BJ (cell line): ENCODE measurements at regions of chr1 and their contacts with region 1.

Region 1: DNA sequence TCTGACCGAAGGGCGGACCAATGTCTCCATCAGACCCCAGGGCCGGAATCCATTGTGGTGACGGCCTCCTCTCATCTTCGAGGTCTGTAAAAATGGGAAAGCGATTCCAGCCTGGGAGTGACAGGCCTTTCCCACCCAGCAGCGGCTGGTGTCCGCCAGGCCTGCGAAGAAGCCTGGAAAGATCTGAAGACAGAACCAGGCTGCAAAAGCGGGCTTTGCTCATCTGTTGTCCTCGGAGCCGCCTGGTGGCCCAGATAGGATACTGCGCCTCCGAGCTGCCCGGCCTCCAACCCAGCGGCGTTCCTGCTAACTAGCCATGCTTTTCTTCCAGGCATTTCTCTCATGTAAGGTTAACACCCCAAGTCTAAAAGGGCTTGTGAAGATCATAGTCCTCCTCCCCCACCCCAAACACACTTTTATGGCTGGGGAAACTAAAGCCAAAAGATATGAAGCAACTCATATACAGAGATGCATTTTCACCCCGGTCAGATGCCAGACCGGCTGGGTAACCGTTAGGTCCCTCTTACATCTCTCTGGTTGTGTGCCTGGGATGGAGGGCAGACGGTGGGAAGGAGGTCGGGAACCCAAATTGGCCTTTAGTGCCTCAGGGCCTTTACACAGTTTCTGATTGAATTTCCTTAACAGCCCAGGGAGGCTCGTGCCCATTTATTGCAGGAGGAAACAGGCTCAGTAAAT is 1.9 kb upstream of the DHRS3 start:
- DNase-seq: no peak
- H3K4me3 ChIP-seq: peak overlapping the region; percentile 93
- H3K27me3 ChIP-seq: no peaks in the 10 kb centered on the region
- CTCF ChIP-seq: peak; percentile 98

Region 2: GRCh38 chr1:12314333-12314903 is 305.5 kb before region 1 on chr1:
- CTCF ChIA-PET with region 1: interaction called, 45 read pairs
- POLR2A ChIA-PET with region 1: no interaction called
- DNase-seq: no peak
- H3K4me3 ChIP-seq: no peak overlapping the region
- H3K27me3 ChIP-seq: no peaks in the 10 kb centered on the region
- CTCF ChIP-seq: peak; percentile 37; the same call in 1 of the 2 replicates

Region 3: DNA sequence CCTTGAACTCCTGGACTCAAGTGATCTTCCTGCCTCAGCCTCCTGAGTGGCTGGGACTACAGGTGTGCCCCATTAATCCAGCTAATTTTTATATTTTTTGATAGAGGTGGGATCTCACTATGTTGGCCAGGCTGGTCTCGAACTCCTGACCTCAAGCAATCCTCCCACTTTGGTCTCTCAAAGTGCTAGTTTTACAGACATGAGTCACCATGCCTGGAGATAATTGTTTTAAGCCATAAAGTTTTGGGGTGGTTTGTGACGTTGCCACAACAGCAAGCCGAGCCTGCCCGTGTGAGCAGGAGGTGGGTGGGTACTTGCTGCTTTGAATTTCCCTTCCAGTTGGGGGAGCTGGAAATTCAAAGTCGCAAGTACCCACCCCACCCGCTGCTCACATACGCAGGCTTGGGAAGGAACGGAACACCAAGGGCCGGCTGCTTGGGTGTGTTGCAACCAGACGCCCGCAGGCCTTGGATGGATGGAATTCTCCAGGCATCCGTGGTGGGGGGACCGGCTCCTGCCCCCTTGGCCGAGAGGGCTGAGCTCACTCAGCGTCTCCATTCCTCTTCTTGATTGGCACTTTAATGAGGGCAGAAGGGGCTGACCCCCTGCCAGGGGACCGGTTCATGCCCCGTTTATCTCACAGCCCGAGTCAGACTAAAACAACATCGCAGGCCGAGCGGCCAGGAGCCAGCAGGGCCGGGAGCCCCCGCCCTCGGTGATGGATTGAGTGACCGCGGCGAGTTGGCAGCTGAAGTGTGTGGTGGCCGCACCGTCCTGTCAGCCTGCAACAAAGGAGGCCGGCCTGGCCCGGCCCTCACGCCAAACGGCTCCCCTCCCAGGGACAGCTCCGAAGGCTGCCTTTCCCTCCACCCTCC is 80.0 kb before region 1 on chr1:
- CTCF ChIA-PET with region 1: interaction called, 11 read pairs
- POLR2A ChIA-PET with region 1: no interaction called
- DNase-seq: peak; percentile 98
- H3K4me3 ChIP-seq: no peak overlapping the region
- H3K27me3 ChIP-seq: peaks cover under 1% of the 10 kb centered on the region
- CTCF ChIP-seq: peak; percentile 24

Region 4: GRCh38 chr1:12604114-12604874 is 15.6 kb before region 1 on chr1:
- CTCF ChIA-PET with region 1: interaction called, 3 read pairs
- POLR2A ChIA-PET with region 1: interaction called, 53 read pairs
- DNase-seq: peak; percentile 86
- H3K4me3 ChIP-seq: no peak overlapping the region
- H3K27me3 ChIP-seq: no peaks in the 10 kb centered on the region
- CTCF ChIP-seq: no peak

Region 5: DNA sequence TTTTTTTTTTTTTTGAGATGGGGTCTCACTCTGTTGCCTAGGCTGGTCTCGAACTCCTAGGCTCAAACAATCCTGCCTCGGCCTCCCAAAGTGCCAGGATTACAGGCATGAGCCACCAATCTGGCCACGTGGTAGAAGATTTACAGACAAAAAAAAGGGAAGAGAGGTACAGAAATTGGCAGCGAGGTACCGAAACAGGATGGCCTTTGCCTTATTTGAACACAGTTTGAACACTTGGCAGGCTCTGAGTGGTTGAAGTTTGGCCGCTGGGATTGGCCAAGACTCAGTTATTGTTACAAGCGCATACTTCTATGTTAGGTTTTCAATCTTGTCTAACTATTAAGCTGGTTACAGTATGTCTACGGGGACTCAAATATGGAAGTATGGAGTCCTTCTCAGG is 17.8 kb after region 1 on chr1:
- CTCF ChIA-PET with region 1: no interaction called
- POLR2A ChIA-PET with region 1: no interaction called
- DNase-seq: no peak
- H3K4me3 ChIP-seq: no peak overlapping the region
- H3K27me3 ChIP-seq: no peaks in the 10 kb centered on the region
- CTCF ChIP-seq: no peak

Region 6: DNA sequence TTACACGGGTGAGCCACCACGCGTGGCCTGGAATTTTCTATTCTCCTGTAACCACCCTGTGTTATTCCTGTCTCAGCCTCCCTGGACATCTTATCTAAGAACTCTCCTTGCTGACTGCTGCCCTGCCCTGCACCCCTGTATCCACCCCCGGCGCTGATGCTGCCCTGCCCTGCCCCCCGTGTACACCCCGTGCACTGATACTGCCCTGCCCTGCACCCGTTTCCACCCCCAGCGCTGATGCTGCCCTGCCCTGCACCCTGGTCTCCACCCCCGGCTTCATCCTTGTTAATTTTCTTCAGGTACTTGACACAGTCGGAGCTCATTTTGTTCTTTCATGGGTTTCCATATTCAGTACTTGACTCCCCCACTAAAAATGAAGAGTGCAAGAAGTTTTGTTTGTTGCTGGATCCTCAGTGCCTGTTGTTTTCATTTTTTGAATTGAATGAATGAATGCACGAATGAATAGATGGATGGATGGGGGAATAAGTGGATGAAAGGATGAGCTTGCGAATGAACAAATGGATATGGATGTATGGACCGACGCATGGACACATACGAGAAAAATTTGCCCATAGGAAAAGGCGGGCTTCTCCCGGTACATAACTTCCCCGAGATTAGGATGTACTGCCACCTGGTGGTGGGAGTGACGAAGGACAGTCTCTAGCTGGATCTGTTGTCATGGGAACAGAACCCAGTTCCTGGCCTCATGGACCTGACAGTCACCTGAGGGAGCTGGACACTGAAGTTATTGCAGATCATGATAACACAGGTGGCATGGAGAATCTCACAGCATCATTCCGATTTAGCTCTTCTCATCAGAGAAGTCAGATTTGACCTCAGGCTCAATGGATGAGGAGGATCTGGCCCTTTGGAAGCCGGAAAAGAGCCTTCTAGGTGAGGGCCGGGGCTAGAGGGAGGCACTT is 38.9 kb after region 1 on chr1:
- CTCF ChIA-PET with region 1: interaction called, 20 read pairs
- POLR2A ChIA-PET with region 1: no interaction called
- DNase-seq: peak; percentile 10
- H3K4me3 ChIP-seq: no peak overlapping the region
- H3K27me3 ChIP-seq: no peaks in the 10 kb centered on the region; the same call in 1 of the 2 replicates
- CTCF ChIP-seq: peak; percentile 91